ENCODE measurements at regions of chr2 and their contacts with region 1.

Region 1: DNA sequence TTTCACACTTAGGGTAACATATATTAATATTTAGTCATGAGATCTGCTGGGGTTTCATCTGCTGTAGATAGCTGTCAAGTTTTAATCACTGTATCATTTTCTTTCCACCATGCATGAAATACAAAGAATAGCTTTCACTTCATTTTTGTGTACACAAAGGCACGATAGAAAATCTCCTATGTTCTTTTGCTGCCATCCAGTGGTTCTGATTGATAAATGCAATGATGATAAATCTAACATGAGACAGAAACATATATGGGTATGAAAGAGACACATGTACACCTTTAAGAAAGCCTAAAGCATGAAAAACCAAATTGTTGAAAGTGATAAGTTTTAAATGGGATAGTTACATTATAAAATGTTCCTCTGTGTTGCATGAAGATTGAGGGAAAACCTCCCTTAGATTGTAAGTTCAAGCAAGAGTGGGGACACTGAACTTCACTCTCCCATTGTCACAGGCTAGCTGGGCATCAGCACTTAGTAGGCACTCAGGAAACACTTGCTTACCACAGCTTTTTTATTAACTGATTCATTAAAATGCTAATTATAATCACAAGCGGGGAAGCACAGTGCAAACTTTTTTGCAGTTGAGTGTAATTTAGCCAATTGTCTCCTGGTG is 31.2 kb downstream of the C1D start:
- DNase-seq: peak; percentile 12
- ATAC-seq: peak; percentile 83
- H3K4me3 ChIP-seq: no peak overlapping the region
- H3K27ac ChIP-seq: no peak overlapping the region
- H3K4me1 ChIP-seq: no peaks in the 10 kb centered on the region
- H3K27me3 ChIP-seq: no peaks in the 10 kb centered on the region
- CTCF ChIP-seq: peak; percentile 50 to 74 (median 65); a peak in 5 of 6 replicates
- EP300 ChIP-seq: no peak
- POLR2A ChIP-seq: no peak
- RAD21 ChIP-seq: peak; percentile 89

Region 2: DNA sequence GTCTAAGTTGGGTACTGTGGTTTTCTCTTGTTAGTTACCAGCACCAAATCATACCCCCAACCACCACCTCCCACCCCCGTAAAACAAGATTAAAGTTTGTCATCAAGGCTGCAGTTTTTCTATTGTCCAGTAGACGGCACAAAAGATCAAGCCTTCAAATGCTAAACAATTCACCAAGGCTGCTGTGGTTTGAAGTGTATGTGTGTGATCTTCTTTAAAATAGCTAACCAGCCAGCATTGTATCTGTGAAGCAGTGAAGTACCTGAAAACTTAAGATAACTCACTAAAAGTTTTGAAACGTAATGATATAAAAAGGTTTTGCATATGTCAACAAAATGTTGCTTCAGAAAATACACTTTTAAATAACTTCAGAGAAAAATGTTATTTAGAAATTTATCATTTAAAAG is 1602.6 kb before region 1 on chr2:
- CTCF ChIA-PET with region 1: interaction called, 3 read pairs
- POLR2A ChIA-PET with region 1: no interaction called
- RAD21 ChIA-PET with region 1: interaction called, 10 read pairs
- SMC1A ChIA-PET with region 1: interaction called, 4 read pairs
- in situ Hi-C with region 1: no loop called
- intact Hi-C with region 1: loop called (anchors 5 kb)
- DNase-seq: no peak
- ATAC-seq: peak; percentile 61
- H3K4me3 ChIP-seq: no peak overlapping the region
- H3K27ac ChIP-seq: no peak overlapping the region
- H3K4me1 ChIP-seq: no peaks in the 10 kb centered on the region
- H3K27me3 ChIP-seq: peaks cover 6 to 16% of the 10 kb centered on the region in 2 experiments
- CTCF ChIP-seq: peak; percentile 60 to 87 (median 82)
- EP300 ChIP-seq: no peak
- POLR2A ChIP-seq: no peak
- RAD21 ChIP-seq: peak; percentile 88

Region 3: GRCh38 chr2:67733517-67733916 is 298.1 kb before region 1 on chr2:
- CTCF ChIA-PET with region 1: interaction called, 43 read pairs
- POLR2A ChIA-PET with region 1: no interaction called
- RAD21 ChIA-PET with region 1: interaction called, 14 read pairs
- SMC1A ChIA-PET with region 1: interaction called, 13 read pairs
- in situ Hi-C with region 1: no loop called
- intact Hi-C with region 1: loop called (anchors 1 kb)
- DNase-seq: no peak
- ATAC-seq: peak; percentile 83
- H3K4me3 ChIP-seq: no peak overlapping the region
- H3K27ac ChIP-seq: no peak overlapping the region
- H3K4me1 ChIP-seq: no peaks in the 10 kb centered on the region
- H3K27me3 ChIP-seq: 0 out of 4 replicates have a peak, but pooled peaks cover 0 to 1% of the 10 kb centered on the region in 2 experiments
- CTCF ChIP-seq: peak; percentile 17 to 61 (median 29); a peak in 5 of 6 replicates
- EP300 ChIP-seq: no peak
- POLR2A ChIP-seq: no peak
- RAD21 ChIP-seq: 0 out of 2 replicates have a peak, but pooled peaks have one; percentile 15

Region 4: DNA sequence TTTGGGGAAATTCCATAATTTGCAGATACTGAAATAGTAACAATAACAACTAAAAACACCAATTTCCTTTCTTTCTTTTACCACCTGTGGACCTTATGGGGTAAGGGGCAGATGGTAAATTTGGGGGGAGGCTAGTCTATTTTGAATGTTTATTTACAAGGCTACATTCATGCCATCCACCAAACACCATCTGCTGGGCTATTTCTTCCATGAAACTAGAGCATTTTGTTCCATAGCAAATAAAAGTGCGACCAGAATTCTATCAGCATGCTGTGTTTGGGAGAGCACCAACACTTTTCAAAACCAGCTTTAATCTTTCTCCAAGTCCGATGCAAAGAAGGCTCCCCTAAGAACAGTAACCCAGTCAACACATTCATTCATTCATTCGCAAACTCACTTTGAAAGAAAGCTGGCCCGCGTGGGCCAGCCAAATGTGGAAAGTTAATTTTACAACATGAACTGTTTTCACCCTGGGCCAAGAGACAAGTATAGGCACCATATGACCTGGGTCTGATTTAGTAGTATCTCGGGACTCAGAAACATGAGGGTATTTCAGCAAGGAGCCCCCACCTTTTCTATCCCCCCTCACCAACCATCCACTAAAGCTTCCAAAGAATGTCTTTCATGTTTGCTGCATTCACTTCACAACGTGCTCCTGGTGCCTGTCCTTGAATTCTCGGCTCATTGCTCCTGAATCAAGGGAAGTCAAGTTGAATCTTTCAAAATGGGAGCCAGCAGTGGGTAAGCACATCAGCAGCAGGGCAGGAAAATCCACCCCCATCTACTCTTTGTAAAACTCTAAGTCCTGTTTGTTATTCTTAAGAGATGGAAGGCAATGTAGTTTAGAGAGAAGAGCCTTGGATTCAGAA is 179.5 kb before region 1 on chr2:
- CTCF ChIA-PET with region 1: no interaction called
- POLR2A ChIA-PET with region 1: no interaction called
- RAD21 ChIA-PET with region 1: no interaction called
- SMC1A ChIA-PET with region 1: interaction called, 7 read pairs
- in situ Hi-C with region 1: no loop called
- intact Hi-C with region 1: loop called (anchors 2 kb)
- DNase-seq: no peak
- ATAC-seq: no peak
- H3K4me3 ChIP-seq: no peak overlapping the region
- H3K27ac ChIP-seq: no peak overlapping the region
- H3K4me1 ChIP-seq: no peaks in the 10 kb centered on the region
- H3K27me3 ChIP-seq: no peaks in the 10 kb centered on the region; a peak in 1 of 4 replicates
- CTCF ChIP-seq: no peak
- EP300 ChIP-seq: no peak
- POLR2A ChIP-seq: no peak
- RAD21 ChIP-seq: no peak

Region 5: GRCh38 chr2:67954093-67954748 is 77.4 kb before region 1 on chr2:
- CTCF ChIA-PET with region 1: no interaction called
- POLR2A ChIA-PET with region 1: no interaction called
- RAD21 ChIA-PET with region 1: no interaction called
- SMC1A ChIA-PET with region 1: no interaction called
- in situ Hi-C with region 1: no loop called
- intact Hi-C with region 1: no loop called
- DNase-seq: no peak
- ATAC-seq: no peak
- H3K4me3 ChIP-seq: no peak overlapping the region
- H3K27ac ChIP-seq: no peak overlapping the region
- H3K4me1 ChIP-seq: peaks cover 7% of the 10 kb centered on the region; the same call in 1 of the 2 replicates
- H3K27me3 ChIP-seq: no peaks in the 10 kb centered on the region
- CTCF ChIP-seq: no peak
- EP300 ChIP-seq: no peak
- POLR2A ChIP-seq: no peak
- RAD21 ChIP-seq: no peak